ENCODE measurements at regions of chr19 and their contacts with region 1.

Region 1: GRCh38 chr19:17692566-17692965 is 4.4 kb upstream of the UNC13A start:
- DNase-seq: no peak
- ATAC-seq: no peak
- H3K4me3 ChIP-seq: no peak overlapping the region
- H3K4me3 Mint-ChIP-seq: no peak overlapping the region
- H3K27ac ChIP-seq: no peak overlapping the region
- H3K27ac Mint-ChIP-seq: no peak overlapping the region
- H3K4me1 ChIP-seq: peaks cover 0 to 9% of the 10 kb centered on the region in 2 experiments
- H3K4me1 Mint-ChIP-seq: peaks cover 5 to 9% (median 8%) of the 10 kb centered on the region in 3 donors
- H3K27me3 ChIP-seq: peaks cover 7 to 46% of the 10 kb centered on the region in 2 experiments
- H3K27me3 Mint-ChIP-seq: peaks cover 29 to 55% of the 10 kb centered on the region in 2 donors

Region 2: DNA sequence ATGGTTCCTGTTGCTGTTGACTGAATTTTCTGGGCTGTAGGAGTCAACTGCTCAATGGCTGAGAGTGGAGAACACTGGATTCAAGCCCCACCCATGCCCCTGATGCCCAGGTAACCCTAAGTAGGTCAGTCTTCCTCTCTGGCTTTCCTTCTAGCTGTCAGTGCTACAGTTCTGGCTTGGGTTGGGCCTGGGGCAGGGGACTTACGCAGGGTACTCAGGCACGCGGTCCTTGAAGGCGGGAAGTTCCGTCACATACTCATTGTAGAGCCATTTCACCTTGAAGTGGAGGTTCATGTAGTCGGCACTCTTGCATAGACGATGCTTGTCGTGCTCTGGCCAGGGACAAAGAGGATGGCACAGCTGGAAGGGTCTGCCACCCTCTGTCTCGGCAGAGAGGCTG is 60.0 kb before region 1 on chr19:
- CTCF ChIA-PET with region 1: no interaction called
- POLR2A ChIA-PET with region 1: interaction called in 1 of 2 experiments, 10 read pairs
- DNase-seq: no peak
- ATAC-seq: no peak
- H3K4me3 ChIP-seq: no peak overlapping the region
- H3K4me3 Mint-ChIP-seq: no peak overlapping the region
- H3K27ac ChIP-seq: no peak overlapping the region
- H3K27ac Mint-ChIP-seq: no peak overlapping the region
- H3K4me1 ChIP-seq: no peaks in the 10 kb centered on the region
- H3K4me1 Mint-ChIP-seq: no peaks in the 10 kb centered on the region
- H3K27me3 ChIP-seq: peaks cover 0 to 5% of the 10 kb centered on the region in 2 experiments
- H3K27me3 Mint-ChIP-seq: peaks cover 4 to 7% of the 10 kb centered on the region in 2 donors

Region 3: DNA sequence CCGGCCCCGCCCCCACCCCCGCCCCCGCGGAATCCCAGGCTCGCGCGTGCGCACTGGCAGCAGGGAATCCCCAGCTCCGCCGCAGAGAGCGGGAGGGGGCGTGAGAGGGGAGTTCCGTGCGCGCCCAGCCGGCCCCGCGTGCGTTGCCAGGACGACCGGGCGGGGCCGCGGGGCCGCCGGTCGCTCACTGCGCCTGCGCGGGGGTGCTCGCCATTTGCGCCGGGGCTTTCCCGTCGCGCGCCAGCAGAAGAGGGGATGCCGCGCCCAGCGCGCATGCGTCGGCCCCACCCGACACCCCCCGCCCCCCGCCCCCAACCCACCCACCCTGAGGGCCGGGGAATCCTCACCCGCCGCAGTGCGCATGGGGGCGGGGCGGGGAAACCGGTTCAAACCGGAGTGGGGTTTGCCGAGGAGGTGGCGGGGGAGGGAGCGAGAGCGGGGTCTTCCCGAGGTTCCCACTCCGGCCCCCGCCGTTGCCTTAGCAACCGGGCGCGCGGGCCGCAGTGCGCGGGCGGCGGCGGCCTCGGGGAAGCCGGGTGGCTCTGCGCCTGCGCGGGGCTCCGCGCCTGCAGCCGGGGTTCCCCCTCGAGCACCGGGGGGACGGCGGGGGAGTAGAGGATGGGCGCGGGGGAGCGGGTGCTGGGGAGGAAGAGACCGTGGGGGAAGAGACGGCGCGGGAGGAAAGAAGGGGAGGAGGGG is 255.4 kb after region 1 on chr19:
- CTCF ChIA-PET with region 1: no interaction called
- POLR2A ChIA-PET with region 1: no interaction called
- DNase-seq: peak; percentile 85 to 98 (median 93)
- ATAC-seq: peak; percentile 71 to 79 (median 77)
- H3K4me3 ChIP-seq: peak overlapping the region in 1 of 2 donors; percentile 53
- H3K4me3 Mint-ChIP-seq: peak overlapping the region; percentile 50 to 80 (median 65)
- H3K27ac ChIP-seq: peak overlapping the region; percentile 95
- H3K27ac Mint-ChIP-seq: no peak overlapping the region
- H3K4me1 ChIP-seq: peaks cover 2 to 60% of the 10 kb centered on the region in 2 experiments
- H3K4me1 Mint-ChIP-seq: peaks cover 46 to 55% (median 46%) of the 10 kb centered on the region in 3 donors
- H3K27me3 ChIP-seq: peaks cover 0 to 45% of the 10 kb centered on the region in 2 experiments
- H3K27me3 Mint-ChIP-seq: peaks cover 18 to 35% of the 10 kb centered on the region in 2 donors

Region 4: GRCh38 chr19:19053508-19054314 is 1361.1 kb after region 1 on chr19:
- CTCF ChIA-PET with region 1: interaction called in 1 of 2 experiments, 12 read pairs
- POLR2A ChIA-PET with region 1: no interaction called
- DNase-seq: peak in 32 of 35 experiments; percentile 24 to 82 (median 52)
- ATAC-seq: peak; percentile 56 to 84 (median 70)
- H3K4me3 ChIP-seq: no peak overlapping the region
- H3K4me3 Mint-ChIP-seq: no peak overlapping the region
- H3K27ac ChIP-seq: no peak overlapping the region
- H3K27ac Mint-ChIP-seq: no peak overlapping the region
- H3K4me1 ChIP-seq: no peaks in the 10 kb centered on the region
- H3K4me1 Mint-ChIP-seq: no peaks in the 10 kb centered on the region
- H3K27me3 ChIP-seq: no peaks in the 10 kb centered on the region
- H3K27me3 Mint-ChIP-seq: no peaks in the 10 kb centered on the region

Measured in T-cell (primary cell).